HEK293 (cell line): ENCODE measurements at regions of chr2 and their contacts with region 1.

Region 1: DNA sequence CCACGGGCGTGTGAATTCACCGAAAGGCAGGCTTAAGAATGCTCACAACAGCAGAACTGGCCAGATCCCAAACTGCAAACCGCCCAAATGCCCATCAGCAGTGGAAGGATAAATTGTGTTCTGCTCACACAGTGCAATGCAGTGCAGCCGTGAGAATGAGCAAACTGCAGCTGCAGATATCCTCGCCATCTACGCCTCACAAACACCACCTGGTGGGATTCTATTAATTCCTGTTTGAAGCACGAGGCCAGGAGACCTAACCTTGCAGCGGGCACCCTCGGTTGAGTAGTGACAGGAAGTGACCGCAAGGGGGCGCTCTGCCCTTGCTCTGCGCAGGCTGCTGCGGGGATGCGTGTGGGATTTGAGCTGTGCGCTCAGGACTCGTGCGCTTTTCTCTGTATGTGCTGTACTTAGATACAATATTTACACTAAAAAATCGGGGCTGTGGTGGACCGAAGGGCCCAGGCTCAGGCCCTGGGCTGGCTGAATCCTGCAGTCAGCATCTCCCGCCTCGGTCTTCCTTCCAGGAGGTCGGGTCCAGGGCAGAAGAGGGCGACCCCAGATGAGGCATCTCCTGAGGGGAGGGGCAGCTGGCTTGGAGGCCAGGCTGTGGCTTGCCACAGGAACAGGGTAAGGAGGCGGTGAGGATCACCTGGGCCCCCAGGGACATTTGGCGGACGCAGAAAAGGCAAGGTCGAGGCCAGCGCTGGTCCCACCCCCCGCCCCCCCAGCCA is 19.8 kb upstream of the PDIA6 start:
- H3K4me3 ChIP-seq: no peak overlapping the region
- H3K27ac ChIP-seq: no peak overlapping the region
- H3K4me1 ChIP-seq: peaks cover 2% of the 10 kb centered on the region; the same call in 1 of the 2 replicates
- CTCF ChIP-seq: peak; percentile 95

Region 2: DNA sequence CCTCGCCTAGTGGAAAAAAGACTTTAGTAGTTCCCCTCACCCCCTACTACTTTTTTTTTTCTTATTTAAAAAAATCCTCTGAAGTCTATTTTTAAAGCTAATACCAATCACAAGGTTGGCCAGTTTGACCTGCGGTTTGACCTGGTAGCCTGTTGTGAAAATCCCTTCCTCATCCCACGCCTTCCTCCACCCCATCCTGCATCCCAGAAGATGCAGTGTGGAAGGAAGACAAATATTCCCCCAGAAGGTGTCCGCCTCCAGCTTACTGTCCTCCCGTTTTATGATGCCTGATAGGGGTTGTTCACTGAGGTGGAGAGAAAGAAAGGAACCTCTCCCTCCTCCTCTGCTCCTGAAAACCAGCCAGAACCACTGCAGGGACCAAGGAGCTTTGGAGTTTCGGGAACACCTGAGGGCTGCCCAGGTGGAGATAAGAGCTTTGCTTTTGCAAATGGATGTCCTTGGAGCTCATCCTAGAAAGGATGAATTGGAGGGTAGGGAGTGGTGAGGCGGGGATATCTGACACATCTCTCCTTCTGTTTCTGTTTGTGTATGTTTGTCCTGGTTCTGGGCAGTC is 110.0 kb before region 1 on chr2:
- CTCF ChIA-PET with region 1: no interaction called
- POLR2A ChIA-PET with region 1: no interaction called
- H3K4me3 ChIP-seq: no peak overlapping the region; the same call in 1 of the 2 replicates
- H3K27ac ChIP-seq: no peak overlapping the region
- H3K4me1 ChIP-seq: no peaks in the 10 kb centered on the region
- CTCF ChIP-seq: no peak

Region 3: GRCh38 chr2:10792001-10792634 is 40.3 kb before region 1 on chr2:
- CTCF ChIA-PET with region 1: interaction called, 16 read pairs
- POLR2A ChIA-PET with region 1: no interaction called
- H3K4me3 ChIP-seq: no peak overlapping the region
- H3K27ac ChIP-seq: no peak overlapping the region
- H3K4me1 ChIP-seq: no peaks in the 10 kb centered on the region
- CTCF ChIP-seq: no peak

Region 4: DNA sequence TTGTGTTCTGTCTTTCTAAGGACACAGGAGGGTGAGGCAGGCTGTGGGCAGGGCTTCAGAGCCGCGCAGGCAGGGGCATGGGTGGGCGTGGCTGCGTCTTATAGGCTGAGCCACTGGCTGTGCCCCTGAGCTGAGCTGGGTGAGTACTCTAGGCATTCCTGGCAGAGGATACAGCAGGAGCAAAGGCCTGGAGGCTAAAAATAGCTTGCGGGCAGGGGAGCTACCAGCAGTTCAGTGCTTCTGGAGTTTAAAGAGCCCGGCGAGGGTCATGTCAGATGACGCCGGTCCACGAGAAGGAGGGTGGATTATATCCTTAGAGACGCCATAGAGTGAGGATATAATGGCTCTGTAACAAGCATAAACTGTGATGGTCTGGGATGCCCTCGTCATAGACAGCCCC is 11.7 kb after region 1 on chr2:
- CTCF ChIA-PET with region 1: interaction called, 11 read pairs
- POLR2A ChIA-PET with region 1: interaction called, 3 read pairs
- H3K4me3 ChIP-seq: no peak overlapping the region
- H3K27ac ChIP-seq: no peak overlapping the region
- H3K4me1 ChIP-seq: no peaks in the 10 kb centered on the region
- CTCF ChIP-seq: no peak

Region 5: GRCh38 chr2:10911261-10912075 is 79.1 kb after region 1 on chr2 and contains the start of gene KCNF1:
- CTCF ChIA-PET with region 1: interaction called, 40 read pairs
- POLR2A ChIA-PET with region 1: no interaction called
- H3K4me3 ChIP-seq: peak within 1 kb of the TSS; percentile 29
- H3K27ac ChIP-seq: no peak within 1 kb of the TSS; the same call in 1 of the 2 replicates
- H3K4me1 ChIP-seq: peaks cover 2% of the 10 kb centered on the region; the same call in 1 of the 2 replicates
- CTCF ChIP-seq: peak; percentile 67; the same call in 1 of the 2 replicates

Region 6: GRCh38 chr2:11118761-11119160 is 286.4 kb after region 1 on chr2:
- CTCF ChIA-PET with region 1: interaction called, 185 read pairs
- POLR2A ChIA-PET with region 1: no interaction called
- H3K4me3 ChIP-seq: no peak overlapping the region
- H3K27ac ChIP-seq: no peak overlapping the region
- H3K4me1 ChIP-seq: no peaks in the 10 kb centered on the region
- CTCF ChIP-seq: no peak